Prostate gland (tissue), 2 donors: ENCODE measurements at regions of chr17 and their contacts with region 1.

Region 1: GRCh38 chr17:60435244-60436167 is 13.2 kb downstream of the CHCT1 start:
- DNase-seq: peak; percentile 77
- H3K4me3 ChIP-seq: no peak overlapping the region
- H3K27ac ChIP-seq: no peak overlapping the region
- H3K4me1 ChIP-seq: no peaks in the 10 kb centered on the region
- H3K27me3 ChIP-seq: no peaks in the 10 kb centered on the region
- CTCF ChIP-seq: peak; percentile 65 to 94 (median 92)
- POLR2A ChIP-seq: no peak

Region 2: GRCh38 chr17:60036796-60037612 is 398.5 kb before region 1 on chr17:
- intact Hi-C with region 1: loop called (anchors 5 kb)
- DNase-seq: peak; percentile 52
- H3K4me3 ChIP-seq: no peak overlapping the region
- H3K27ac ChIP-seq: no peak overlapping the region
- H3K4me1 ChIP-seq: no peaks in the 10 kb centered on the region
- H3K27me3 ChIP-seq: no peaks in the 10 kb centered on the region
- CTCF ChIP-seq: peak; percentile 43 to 71 (median 55)
- POLR2A ChIP-seq: no peak

Region 3: GRCh38 chr17:60142872-60143499 is 292.5 kb before region 1 on chr17:
- intact Hi-C with region 1: loop called (anchors 10 kb)
- DNase-seq: peak; percentile 77
- H3K4me3 ChIP-seq: no peak overlapping the region
- H3K27ac ChIP-seq: no peak overlapping the region
- H3K4me1 ChIP-seq: peaks cover 3% of the 10 kb centered on the region
- H3K27me3 ChIP-seq: peaks cover 20% of the 10 kb centered on the region
- CTCF ChIP-seq: peak; percentile 26 to 67 (median 64)
- POLR2A ChIP-seq: no peak

Region 4: DNA sequence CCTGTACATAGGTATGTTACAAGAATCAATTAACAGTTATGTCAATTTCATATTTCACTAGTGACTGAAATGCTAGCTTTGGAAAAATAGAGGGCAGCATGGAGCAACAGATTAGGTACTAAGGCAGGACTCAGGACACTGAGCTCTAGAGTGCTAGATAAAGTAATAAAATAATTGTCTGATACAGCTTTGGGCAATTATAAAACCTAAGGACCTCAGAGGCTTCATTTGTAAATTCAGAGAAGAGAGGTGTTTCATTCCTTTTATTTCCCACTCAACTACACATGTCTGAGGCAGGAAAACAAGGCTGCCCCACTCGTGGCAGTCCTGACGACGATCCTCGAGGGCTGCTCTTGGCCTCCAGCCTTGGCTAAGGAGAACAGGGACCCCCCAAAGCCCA is 204.3 kb before region 1 on chr17:
- intact Hi-C with region 1: loop called (anchors 5 kb)
- DNase-seq: no peak
- H3K4me3 ChIP-seq: no peak overlapping the region
- H3K27ac ChIP-seq: no peak overlapping the region
- H3K4me1 ChIP-seq: no peaks in the 10 kb centered on the region
- H3K27me3 ChIP-seq: no peaks in the 10 kb centered on the region
- CTCF ChIP-seq: peak in 2 of 4 experiments; percentile 38 to 39
- POLR2A ChIP-seq: no peak

Region 5: DNA sequence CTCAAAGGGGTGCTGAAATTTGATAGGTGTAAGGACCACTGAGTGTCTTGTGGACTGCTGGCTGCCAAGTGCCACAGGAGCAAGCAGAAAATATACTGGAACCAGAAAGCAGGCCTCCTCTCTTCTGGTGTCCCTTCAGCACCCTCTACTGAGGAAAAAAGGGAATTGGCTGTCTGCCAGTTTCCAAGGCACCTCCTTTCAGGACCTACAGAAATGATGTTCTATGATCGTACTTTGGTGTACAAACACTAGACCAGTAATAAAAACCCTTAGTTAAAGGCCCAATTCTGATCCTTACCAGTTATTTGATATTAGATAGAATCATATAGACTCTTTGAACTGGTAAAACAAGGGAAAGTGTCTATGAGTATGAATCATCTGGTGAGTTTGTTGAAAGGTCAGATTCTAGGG is 206.3 kb after region 1 on chr17:
- intact Hi-C with region 1: loop called (anchors 10 kb)
- DNase-seq: peak; percentile 43
- H3K4me3 ChIP-seq: no peak overlapping the region
- H3K27ac ChIP-seq: no peak overlapping the region
- H3K4me1 ChIP-seq: no peaks in the 10 kb centered on the region
- H3K27me3 ChIP-seq: no peaks in the 10 kb centered on the region
- CTCF ChIP-seq: peak in 3 of 4 experiments; percentile 21 to 39 (median 36)
- POLR2A ChIP-seq: no peak